ENCODE measurements at regions of chr10 and their contacts with region 1.

Region 1: GRCh38 chr10:14571866-14572507 is 202.7 kb downstream of the FAM107B start:
- DNase-seq: peak; percentile 77
- ATAC-seq: peak; percentile 71
- H3K4me3 Mint-ChIP-seq: peak overlapping the region; percentile 87
- H3K27ac Mint-ChIP-seq: peak overlapping the region; percentile 96
- H3K4me1 Mint-ChIP-seq: peaks cover 87% of the 10 kb centered on the region
- H3K27me3 Mint-ChIP-seq: no peaks in the 10 kb centered on the region

Region 2: DNA sequence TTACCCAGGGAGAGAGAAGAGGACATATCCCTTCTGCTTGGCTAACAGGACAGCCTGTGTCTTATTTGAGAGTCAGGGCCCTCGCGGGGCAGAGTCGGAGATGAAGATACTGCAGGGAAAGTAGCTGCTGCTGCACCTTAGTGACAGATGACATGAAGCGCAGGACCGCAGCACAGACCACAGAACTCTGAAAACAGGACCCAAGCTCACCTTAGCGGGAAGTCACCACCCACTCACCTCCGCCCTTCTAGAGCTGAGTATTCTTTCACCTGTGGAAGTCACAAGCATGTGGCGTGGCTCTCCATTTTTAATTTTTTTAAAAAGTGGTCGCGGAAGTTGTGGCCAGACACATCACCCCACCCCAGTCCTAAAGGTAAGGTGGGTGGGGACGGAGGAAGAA is 11.3 kb after region 1 on chr10:
- CTCF ChIA-PET with region 1: interaction called, 9 read pairs
- POLR2A ChIA-PET with region 1: interaction called, 17 read pairs
- DNase-seq: peak; percentile 90
- ATAC-seq: peak; percentile 71
- H3K4me3 Mint-ChIP-seq: peak overlapping the region; percentile 53
- H3K27ac Mint-ChIP-seq: peak overlapping the region; percentile 85
- H3K4me1 Mint-ChIP-seq: peaks cover 85% of the 10 kb centered on the region
- H3K27me3 Mint-ChIP-seq: no peaks in the 10 kb centered on the region

Region 3: GRCh38 chr10:14665304-14665703 is 93.3 kb after region 1 on chr10:
- CTCF ChIA-PET with region 1: no interaction called
- POLR2A ChIA-PET with region 1: no interaction called
- DNase-seq: no peak
- ATAC-seq: no peak
- H3K4me3 Mint-ChIP-seq: no peak overlapping the region
- H3K27ac Mint-ChIP-seq: no peak overlapping the region
- H3K4me1 Mint-ChIP-seq: peaks cover 17% of the 10 kb centered on the region
- H3K27me3 Mint-ChIP-seq: no peaks in the 10 kb centered on the region

Measured in activated CD8-positive, alpha-beta T cell treated with anti-CD3 and anti-CD28 coated beads, Interleukin-2, amount 10 ng/mL, durations not matched to agents 7 days and 5 days (primary cell).